CD8-positive, alpha-beta memory T cell (primary cell): ENCODE measurements at regions of chr10 and their contacts with region 1.

Region 1: GRCh38 chr10:93376372-93377293 is 105.5 kb downstream of the MYOF start:
- DNase-seq: peak in 4 of 5 donors; percentile 24 to 67 (median 58)
- H3K4me3 ChIP-seq: no peak overlapping the region
- H3K4me3 Mint-ChIP-seq: no peak overlapping the region
- H3K27ac ChIP-seq: no peak overlapping the region
- H3K27ac Mint-ChIP-seq: no peak overlapping the region
- H3K4me1 ChIP-seq: no peaks in the 10 kb centered on the region
- H3K4me1 Mint-ChIP-seq: peaks cover 6 to 16% (median 10%) of the 10 kb centered on the region in 3 donors
- H3K27me3 ChIP-seq: no peaks in the 10 kb centered on the region
- H3K27me3 Mint-ChIP-seq: peaks cover 0 to 8% of the 10 kb centered on the region in 2 donors

Region 2: GRCh38 chr10:93309062-93309461 is 67.6 kb before region 1 on chr10:
- CTCF ChIA-PET with region 1: no interaction called
- POLR2A ChIA-PET with region 1: no interaction called
- DNase-seq: no peak
- H3K4me3 ChIP-seq: no peak overlapping the region
- H3K4me3 Mint-ChIP-seq: no peak overlapping the region
- H3K27ac ChIP-seq: no peak overlapping the region
- H3K27ac Mint-ChIP-seq: no peak overlapping the region
- H3K4me1 ChIP-seq: no peaks in the 10 kb centered on the region
- H3K4me1 Mint-ChIP-seq: no peaks in the 10 kb centered on the region
- H3K27me3 ChIP-seq: no peaks in the 10 kb centered on the region
- H3K27me3 Mint-ChIP-seq: peaks cover 7% of the 10 kb centered on the region in 2 donors

Region 3: GRCh38 chr10:93413252-93413689 is 36.6 kb after region 1 on chr10:
- CTCF ChIA-PET with region 1: interaction called, 10 read pairs
- POLR2A ChIA-PET with region 1: no interaction called
- DNase-seq: peak in 4 of 5 donors; percentile 3 to 62 (median 47)
- H3K4me3 ChIP-seq: peak overlapping the region; percentile 2
- H3K4me3 Mint-ChIP-seq: peak overlapping the region in 6 of 7 donors; percentile 49 to 71 (median 68)
- H3K27ac ChIP-seq: no peak overlapping the region
- H3K27ac Mint-ChIP-seq: peak overlapping the region; percentile 82 to 95 (median 92)
- H3K4me1 ChIP-seq: peaks cover 61% of the 10 kb centered on the region
- H3K4me1 Mint-ChIP-seq: peaks cover 45 to 55% (median 50%) of the 10 kb centered on the region in 3 donors
- H3K27me3 ChIP-seq: no peaks in the 10 kb centered on the region
- H3K27me3 Mint-ChIP-seq: no peaks in the 10 kb centered on the region

Region 4: DNA sequence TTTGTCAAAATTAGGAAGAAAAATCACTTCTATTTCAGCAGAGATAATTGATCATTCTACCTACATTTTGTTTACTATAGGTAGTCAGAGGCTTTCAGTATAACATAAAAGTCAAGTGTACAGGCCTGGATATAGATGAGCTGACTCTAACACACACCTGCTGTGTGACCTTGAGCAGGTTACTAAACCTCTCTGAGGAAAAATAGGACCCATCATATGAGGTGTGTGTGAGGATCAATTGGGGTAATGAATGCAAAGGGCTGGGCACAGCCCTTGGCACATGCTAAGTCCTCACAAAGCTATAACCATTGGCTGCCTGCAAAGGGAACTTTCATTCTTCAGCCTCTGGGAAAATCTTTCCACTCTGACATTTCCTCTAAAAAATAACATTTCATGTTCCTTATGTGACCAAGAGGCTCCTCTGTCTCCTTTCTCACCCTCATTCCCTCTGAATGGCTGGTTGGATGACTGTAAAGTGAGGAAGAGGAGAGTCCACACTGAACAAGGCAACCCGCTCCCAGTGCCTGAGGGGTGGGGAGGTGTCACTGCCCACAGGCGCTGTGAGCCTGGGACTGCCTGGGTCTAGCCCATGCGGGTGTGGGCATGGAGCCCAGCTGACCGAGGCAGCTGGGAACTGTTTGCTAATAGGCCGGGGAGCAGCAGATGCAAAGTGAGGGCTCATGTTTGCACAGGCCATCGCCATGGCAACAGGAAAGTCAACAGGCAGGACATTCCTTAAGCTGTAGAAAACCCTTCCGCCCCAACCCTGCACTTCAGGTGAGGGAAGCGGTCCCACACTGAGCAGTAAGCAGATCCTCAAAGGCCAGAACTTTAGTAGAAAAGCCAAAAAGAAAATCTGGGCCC is 68.7 kb after region 1 on chr10:
- CTCF ChIA-PET with region 1: no interaction called
- POLR2A ChIA-PET with region 1: no interaction called
- DNase-seq: no peak
- H3K4me3 ChIP-seq: no peak overlapping the region
- H3K4me3 Mint-ChIP-seq: no peak overlapping the region
- H3K27ac ChIP-seq: no peak overlapping the region
- H3K27ac Mint-ChIP-seq: peak overlapping the region in 1 of 8 donors; percentile 43
- H3K4me1 ChIP-seq: no peaks in the 10 kb centered on the region
- H3K4me1 Mint-ChIP-seq: no peaks in the 10 kb centered on the region
- H3K27me3 ChIP-seq: no peaks in the 10 kb centered on the region
- H3K27me3 Mint-ChIP-seq: no peaks in the 10 kb centered on the region

Region 5: DNA sequence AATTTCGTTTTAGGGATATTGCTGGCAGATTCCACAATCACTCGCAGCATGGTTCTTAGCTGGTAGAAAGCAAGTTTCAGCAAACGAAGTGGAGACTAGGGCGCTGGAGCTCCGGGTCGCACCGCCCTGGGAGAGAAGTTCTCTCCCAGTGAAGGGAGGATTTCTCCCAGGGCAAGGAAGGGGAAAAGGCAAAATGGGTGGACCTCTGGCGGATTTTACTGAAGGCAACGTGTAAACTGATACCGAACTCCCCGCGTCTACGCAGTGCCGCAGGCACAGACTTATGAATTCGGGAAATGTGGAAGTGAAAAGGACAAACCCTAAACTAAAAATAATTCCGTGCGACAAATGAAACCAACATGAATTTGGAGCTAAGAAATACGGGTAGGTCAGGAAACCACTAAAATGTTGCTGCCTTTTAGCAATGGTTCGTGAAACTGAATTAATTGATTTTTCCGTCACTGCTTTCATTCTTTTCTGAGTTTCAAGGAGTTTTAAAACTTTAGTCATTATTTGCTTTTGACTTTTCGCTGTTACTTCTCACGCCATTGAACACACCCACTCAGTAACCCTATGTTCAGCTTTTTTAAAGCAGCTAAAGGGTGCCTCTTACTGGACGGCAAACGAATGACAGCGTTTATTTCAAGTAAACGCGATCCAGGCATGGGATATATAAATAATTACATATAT is 105.7 kb after region 1 on chr10 and contains the start of gene MYOF:
- CTCF ChIA-PET with region 1: interaction called, 220 read pairs
- POLR2A ChIA-PET with region 1: interaction called, 5 read pairs
- DNase-seq: peak in 4 of 5 donors; percentile 15 to 58 (median 48)
- H3K4me3 ChIP-seq: peak within 1 kb of the TSS; percentile 42
- H3K4me3 Mint-ChIP-seq: peak within 1 kb of the TSS; percentile 78 to 90 (median 84)
- H3K27ac ChIP-seq: no peak within 1 kb of the TSS
- H3K27ac Mint-ChIP-seq: peak within 1 kb of the TSS in 3 of 8 donors; percentile 2 to 8 (median 8)
- H3K4me1 ChIP-seq: peaks cover 6% of the 10 kb centered on the region
- H3K4me1 Mint-ChIP-seq: peaks cover 7 to 12% (median 11%) of the 10 kb centered on the region in 3 donors
- H3K27me3 ChIP-seq: peaks cover 10% of the 10 kb centered on the region
- H3K27me3 Mint-ChIP-seq: peaks cover 21 to 38% of the 10 kb centered on the region in 2 donors
- total RNA-seq, gene MYOF: 57.0 to 62.8 TPM

Region 6: GRCh38 chr10:93496322-93497041 is 119.8 kb after region 1 on chr10 and contains the start of gene CEP55:
- CTCF ChIA-PET with region 1: interaction called, 12 read pairs
- POLR2A ChIA-PET with region 1: no interaction called
- DNase-seq: peak; percentile 93 to 96 (median 94)
- H3K4me3 ChIP-seq: peak within 1 kb of the TSS; percentile 95
- H3K4me3 Mint-ChIP-seq: peak within 1 kb of the TSS; percentile 91 to 96 (median 93)
- H3K27ac ChIP-seq: peak within 1 kb of the TSS; percentile 52
- H3K27ac Mint-ChIP-seq: peak within 1 kb of the TSS; percentile 61 to 88 (median 82)
- H3K4me1 ChIP-seq: peaks cover 12% of the 10 kb centered on the region
- H3K4me1 Mint-ChIP-seq: peaks cover 18 to 40% (median 24%) of the 10 kb centered on the region in 3 donors
- H3K27me3 ChIP-seq: no peaks in the 10 kb centered on the region
- H3K27me3 Mint-ChIP-seq: peaks cover 1 to 5% of the 10 kb centered on the region in 2 donors
- total RNA-seq, gene CEP55: 41.2 to 44.4 TPM

Region 7: GRCh38 chr10:93512565-93512964 is 135.9 kb after region 1 on chr10:
- CTCF ChIA-PET with region 1: interaction called, 53 read pairs
- POLR2A ChIA-PET with region 1: no interaction called
- DNase-seq: no peak
- H3K4me3 ChIP-seq: no peak overlapping the region
- H3K4me3 Mint-ChIP-seq: no peak overlapping the region
- H3K27ac ChIP-seq: no peak overlapping the region
- H3K27ac Mint-ChIP-seq: no peak overlapping the region
- H3K4me1 ChIP-seq: no peaks in the 10 kb centered on the region
- H3K4me1 Mint-ChIP-seq: peaks cover 3 to 5% (median 4%) of the 10 kb centered on the region in 3 donors
- H3K27me3 ChIP-seq: no peaks in the 10 kb centered on the region
- H3K27me3 Mint-ChIP-seq: no peaks in the 10 kb centered on the region